CD14-positive monocyte (primary cell): ENCODE measurements at regions of chr3 and their contacts with region 1.

Region 1: DNA sequence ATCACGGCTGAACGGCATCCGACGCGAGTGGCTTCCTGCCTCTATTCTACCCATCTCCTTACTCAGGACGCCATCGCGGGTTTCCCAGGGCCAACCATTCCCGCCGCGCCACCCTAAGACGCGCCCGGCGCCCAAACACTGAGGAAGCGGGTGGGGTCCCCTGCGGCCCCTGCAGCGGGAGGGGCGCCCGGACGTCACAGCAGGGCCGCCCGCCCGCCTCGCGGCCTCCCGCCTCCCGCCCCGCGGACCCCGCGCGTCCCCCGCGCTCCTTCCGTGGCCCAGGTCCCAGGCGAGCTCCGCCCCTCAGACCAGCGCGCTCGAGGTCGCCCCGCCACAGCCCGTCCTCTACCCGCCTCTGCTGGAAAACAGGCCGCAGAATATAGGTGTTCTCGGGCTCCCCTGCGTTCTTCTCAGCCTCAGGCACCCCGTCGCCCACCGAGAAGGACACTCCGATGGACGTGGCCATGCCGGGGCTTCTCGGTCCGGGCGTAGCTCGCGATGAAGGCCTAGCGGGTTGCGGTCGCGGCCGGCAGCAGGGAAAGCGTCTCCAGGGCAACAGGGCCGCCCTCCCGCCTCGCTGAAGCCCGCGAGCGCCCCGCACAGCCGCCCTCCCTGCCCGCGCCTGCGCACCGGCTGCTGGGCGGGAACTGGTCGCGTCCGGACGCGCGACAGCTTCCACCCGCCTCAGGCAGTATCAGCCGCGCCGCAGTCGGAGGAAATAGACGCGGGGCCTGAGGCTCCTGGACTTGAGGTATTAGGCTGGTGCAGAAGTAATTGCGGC is at the start of gene DYNLT2B:
- DNase-seq: peak; percentile 84 to 88 (median 86)
- H3K4me3 ChIP-seq: peak within 1 kb of the TSS; percentile 64 to 88 (median 82)
- H3K4me3 Mint-ChIP-seq: peak within 1 kb of the TSS; percentile 93 to 97
- H3K27ac ChIP-seq: peak within 1 kb of the TSS; percentile 72 to 83
- H3K27ac Mint-ChIP-seq: peak within 1 kb of the TSS; percentile 91 to 97 (median 95)
- H3K4me1 ChIP-seq: peaks cover 20 to 33% of the 10 kb centered on the region in 2 donors
- H3K4me1 Mint-ChIP-seq: peaks cover 34% of the 10 kb centered on the region
- H3K27me3 ChIP-seq: no peaks in the 10 kb centered on the region
- H3K27me3 Mint-ChIP-seq: peaks cover 0 to 1% (median 1%) of the 10 kb centered on the region in 3 donors
- CTCF ChIP-seq: no peak
- polyA plus RNA-seq, gene DYNLT2B: 2.5 to 3.0 (median 2.7) TPM

Region 2: GRCh38 chr3:196357905-196358304 is 40.0 kb after region 1 on chr3:
- intact Hi-C with region 1: loop called in 1 of 2 experiments (anchors 5 kb)
- DNase-seq: no peak
- H3K4me3 ChIP-seq: no peak overlapping the region
- H3K4me3 Mint-ChIP-seq: no peak overlapping the region
- H3K27ac ChIP-seq: no peak overlapping the region
- H3K27ac Mint-ChIP-seq: peak overlapping the region in 1 of 7 donors; percentile 64
- H3K4me1 ChIP-seq: no peaks in the 10 kb centered on the region
- H3K4me1 Mint-ChIP-seq: no peaks in the 10 kb centered on the region
- H3K27me3 ChIP-seq: no peaks in the 10 kb centered on the region
- H3K27me3 Mint-ChIP-seq: no peaks in the 10 kb centered on the region
- CTCF ChIP-seq: no peak

Region 3: GRCh38 chr3:196378146-196378841 is 60.4 kb after region 1 on chr3:
- intact Hi-C with region 1: no loop called
- DNase-seq: no peak
- H3K4me3 ChIP-seq: no peak overlapping the region
- H3K4me3 Mint-ChIP-seq: no peak overlapping the region
- H3K27ac ChIP-seq: no peak overlapping the region
- H3K27ac Mint-ChIP-seq: no peak overlapping the region
- H3K4me1 ChIP-seq: no peaks in the 10 kb centered on the region
- H3K4me1 Mint-ChIP-seq: peaks cover under 1% of the 10 kb centered on the region
- H3K27me3 ChIP-seq: no peaks in the 10 kb centered on the region
- H3K27me3 Mint-ChIP-seq: no peaks in the 10 kb centered on the region
- CTCF ChIP-seq: no peak

Region 4: GRCh38 chr3:196412704-196413103 is 94.8 kb after region 1 on chr3:
- intact Hi-C with region 1: loop called in 1 of 2 experiments (anchors 10 kb)
- DNase-seq: peak in 1 of 3 donors; percentile 14
- H3K4me3 ChIP-seq: no peak overlapping the region
- H3K4me3 Mint-ChIP-seq: no peak overlapping the region
- H3K27ac ChIP-seq: peak overlapping the region in 1 of 2 donors; percentile 5
- H3K27ac Mint-ChIP-seq: peak overlapping the region in 5 of 7 donors; percentile 6 to 72 (median 32)
- H3K4me1 ChIP-seq: peaks cover 29 to 31% of the 10 kb centered on the region in 2 donors
- H3K4me1 Mint-ChIP-seq: peaks cover 41% of the 10 kb centered on the region
- H3K27me3 ChIP-seq: no peaks in the 10 kb centered on the region
- H3K27me3 Mint-ChIP-seq: no peaks in the 10 kb centered on the region
- CTCF ChIP-seq: no peak

Region 5: DNA sequence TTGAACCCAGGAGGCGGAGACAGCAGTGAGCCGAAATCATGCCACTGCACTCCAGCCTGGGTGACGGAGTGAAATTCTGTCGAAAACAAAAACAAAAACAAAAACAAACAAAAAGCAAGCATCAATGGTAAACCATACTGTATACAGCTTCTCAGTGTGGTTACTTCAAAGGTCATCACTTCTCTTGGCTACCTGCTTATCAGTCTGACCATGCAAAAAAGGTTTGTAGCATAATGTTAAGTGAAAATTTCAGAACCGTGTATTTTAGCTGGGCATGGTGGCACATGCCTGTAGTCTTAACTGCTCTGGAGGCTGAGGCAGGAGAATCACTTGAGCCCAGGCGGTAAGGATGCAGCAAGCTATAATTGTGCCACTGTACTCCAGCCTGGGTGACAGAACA is 110.2 kb after region 1 on chr3:
- intact Hi-C with region 1: no loop called
- DNase-seq: no peak
- H3K4me3 ChIP-seq: no peak overlapping the region
- H3K4me3 Mint-ChIP-seq: no peak overlapping the region
- H3K27ac ChIP-seq: no peak overlapping the region
- H3K27ac Mint-ChIP-seq: peak overlapping the region in 3 of 7 donors; percentile 36 to 45 (median 40)
- H3K4me1 ChIP-seq: peaks cover 12 to 16% of the 10 kb centered on the region in 2 donors
- H3K4me1 Mint-ChIP-seq: peaks cover 18% of the 10 kb centered on the region
- H3K27me3 ChIP-seq: no peaks in the 10 kb centered on the region
- H3K27me3 Mint-ChIP-seq: no peaks in the 10 kb centered on the region
- CTCF ChIP-seq: no peak